Activated CD4-positive, alpha-beta T cell treated with anti-CD3 and anti-CD28 coated beads for 36 hours (primary cell): ENCODE measurements at regions of chr17 and their contacts with region 1.

Region 1: GRCh38 chr17:27544350-27545131 is 86.4 kb upstream of the LGALS9 start:
- DNase-seq: peak; percentile 89
- ATAC-seq: peak; percentile 83
- H3K4me3 Mint-ChIP-seq: peak overlapping the region; percentile 62
- H3K27ac Mint-ChIP-seq: peak overlapping the region; percentile 93
- H3K4me1 Mint-ChIP-seq: peaks cover 80% of the 10 kb centered on the region
- H3K27me3 Mint-ChIP-seq: no peaks in the 10 kb centered on the region

Region 2: GRCh38 chr17:27293898-27294688 is 250.4 kb before region 1 on chr17 and contains the start of gene WSB1:
- CTCF ChIA-PET with region 1: no interaction called
- POLR2A ChIA-PET with region 1: interaction called, 5 read pairs
- intact Hi-C with region 1: loop called in 1 of 2 experiments (anchors 10 kb)
- DNase-seq: peak; percentile 96
- ATAC-seq: peak; percentile 86
- H3K4me3 Mint-ChIP-seq: peak within 1 kb of the TSS; percentile 89
- H3K27ac Mint-ChIP-seq: peak within 1 kb of the TSS; percentile 99
- H3K4me1 Mint-ChIP-seq: peaks cover 32% of the 10 kb centered on the region
- H3K27me3 Mint-ChIP-seq: no peaks in the 10 kb centered on the region
- total RNA-seq, gene WSB1: 145 to 190 TPM

Region 3: DNA sequence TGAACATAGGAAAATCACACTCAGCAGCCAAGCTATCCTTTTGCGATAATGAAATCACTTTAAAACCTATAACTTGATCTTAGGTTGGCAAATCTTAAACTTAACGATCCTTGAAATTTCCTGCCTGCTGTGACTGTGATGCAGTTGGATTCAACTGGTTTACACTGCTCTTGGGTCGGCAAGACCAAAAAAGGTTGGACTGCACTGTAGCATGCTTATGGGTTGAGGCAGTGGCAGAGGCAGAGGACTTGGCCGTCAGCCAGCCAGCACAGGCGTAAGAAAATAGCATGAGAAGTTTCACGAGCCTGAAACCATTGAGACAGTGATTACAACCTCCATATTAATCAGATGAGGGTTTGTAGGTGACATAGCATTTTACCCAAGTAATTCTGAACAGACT is 229.2 kb before region 1 on chr17:
- CTCF ChIA-PET with region 1: no interaction called
- POLR2A ChIA-PET with region 1: no interaction called
- intact Hi-C with region 1: no loop called
- DNase-seq: no peak
- ATAC-seq: no peak
- H3K4me3 Mint-ChIP-seq: no peak overlapping the region
- H3K27ac Mint-ChIP-seq: no peak overlapping the region
- H3K4me1 Mint-ChIP-seq: no peaks in the 10 kb centered on the region
- H3K27me3 Mint-ChIP-seq: no peaks in the 10 kb centered on the region

Region 4: GRCh38 chr17:27353461-27354050 is 191.0 kb before region 1 on chr17:
- CTCF ChIA-PET with region 1: no interaction called
- POLR2A ChIA-PET with region 1: no interaction called
- intact Hi-C with region 1: loop called (anchors 1 to 10 kb)
- DNase-seq: peak; percentile 94
- ATAC-seq: peak; percentile 90
- H3K4me3 Mint-ChIP-seq: peak overlapping the region; percentile 85
- H3K27ac Mint-ChIP-seq: peak overlapping the region; percentile 95
- H3K4me1 Mint-ChIP-seq: peaks cover 25% of the 10 kb centered on the region
- H3K27me3 Mint-ChIP-seq: no peaks in the 10 kb centered on the region

Region 5: GRCh38 chr17:27466743-27467375 is 77.7 kb before region 1 on chr17:
- CTCF ChIA-PET with region 1: interaction called, 10 read pairs
- POLR2A ChIA-PET with region 1: interaction called, 17 read pairs
- intact Hi-C with region 1: no loop called
- DNase-seq: peak; percentile 91
- ATAC-seq: peak; percentile 84
- H3K4me3 Mint-ChIP-seq: peak overlapping the region; percentile 71
- H3K27ac Mint-ChIP-seq: peak overlapping the region; percentile 96
- H3K4me1 Mint-ChIP-seq: peaks cover 93% of the 10 kb centered on the region
- H3K27me3 Mint-ChIP-seq: no peaks in the 10 kb centered on the region

Region 6: DNA sequence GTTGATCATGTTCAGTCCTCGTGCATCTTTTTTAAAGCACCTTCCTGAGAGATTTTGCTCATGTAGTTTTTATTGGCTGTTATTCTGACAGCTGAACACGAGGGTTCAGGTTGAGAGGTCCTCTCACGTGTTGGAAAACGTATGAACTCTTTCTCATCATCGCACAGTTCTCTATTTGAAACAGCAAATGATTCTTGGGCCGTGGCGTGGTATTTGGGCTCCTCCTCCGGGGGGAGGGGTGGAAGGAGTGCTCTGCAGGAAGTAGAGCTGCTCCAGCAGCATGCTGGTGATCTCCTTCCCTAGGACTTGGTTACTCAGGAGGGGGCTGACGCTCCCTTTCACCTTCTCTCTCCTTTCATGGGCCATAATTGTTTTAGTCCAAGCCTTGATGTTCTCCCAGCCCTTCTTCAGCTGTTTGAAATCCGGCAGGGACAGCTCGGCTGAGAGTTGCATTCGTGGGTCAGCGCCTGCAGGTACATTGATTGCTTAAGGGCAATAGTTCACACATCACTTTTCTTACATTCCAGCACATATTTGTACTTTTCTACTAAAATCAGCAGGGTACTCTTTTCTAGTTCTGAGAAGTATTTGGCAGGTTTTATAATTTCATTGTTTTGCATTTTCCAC is 17.8 kb before region 1 on chr17:
- CTCF ChIA-PET with region 1: interaction called, 3 read pairs
- POLR2A ChIA-PET with region 1: interaction called, 3 read pairs
- intact Hi-C with region 1: loop called (anchors 1 kb)
- DNase-seq: peak; percentile 80
- ATAC-seq: peak; percentile 93
- H3K4me3 Mint-ChIP-seq: no peak overlapping the region
- H3K27ac Mint-ChIP-seq: peak overlapping the region; percentile 48
- H3K4me1 Mint-ChIP-seq: peaks cover 74% of the 10 kb centered on the region
- H3K27me3 Mint-ChIP-seq: no peaks in the 10 kb centered on the region

Region 7: GRCh38 chr17:27569257-27569722 is 24.7 kb after region 1 on chr17:
- CTCF ChIA-PET with region 1: interaction called, 16 read pairs
- POLR2A ChIA-PET with region 1: interaction called, 7 read pairs
- intact Hi-C with region 1: loop called in 1 of 2 experiments (anchors 2 kb)
- DNase-seq: peak; percentile 83
- ATAC-seq: peak; percentile 70
- H3K4me3 Mint-ChIP-seq: no peak overlapping the region
- H3K27ac Mint-ChIP-seq: peak overlapping the region; percentile 68
- H3K4me1 Mint-ChIP-seq: peaks cover 75% of the 10 kb centered on the region
- H3K27me3 Mint-ChIP-seq: no peaks in the 10 kb centered on the region

Region 8: DNA sequence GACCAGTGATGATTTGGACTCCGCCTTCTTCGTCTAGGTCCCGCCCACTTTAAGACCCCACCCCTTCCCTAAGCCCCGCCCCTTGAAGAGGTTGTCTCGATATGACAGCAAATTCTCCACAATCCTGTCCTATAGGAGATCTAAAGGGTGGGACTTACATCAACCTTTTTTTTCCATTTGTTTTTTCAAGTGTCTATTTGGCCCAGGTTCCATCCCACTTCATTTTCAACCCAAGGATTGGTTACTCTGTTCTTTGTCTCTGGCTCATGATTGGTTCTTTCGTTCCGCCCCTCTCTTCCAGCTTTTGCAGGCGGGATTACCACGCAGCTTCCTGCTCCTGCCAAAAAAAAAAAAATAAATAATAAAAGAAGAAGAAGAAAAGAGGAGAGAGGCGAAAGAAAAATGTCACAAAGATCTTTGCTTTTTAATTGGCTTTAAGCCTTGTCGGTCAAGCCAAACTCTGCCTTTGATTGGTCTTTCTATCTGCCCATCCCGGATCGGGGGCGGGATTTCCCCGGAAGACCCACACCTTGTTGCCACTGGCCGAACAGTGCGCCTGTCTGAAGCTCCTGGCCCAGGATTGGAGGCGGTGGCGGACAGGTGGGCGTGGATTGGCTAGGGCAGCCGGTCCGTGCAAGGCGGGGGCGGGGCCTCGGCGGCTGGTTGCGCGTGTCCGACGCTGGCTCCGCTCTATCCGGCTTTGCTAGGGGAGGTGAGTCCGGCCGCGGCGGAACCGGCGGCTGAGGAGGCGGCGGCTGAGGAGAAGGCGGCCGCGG is 496.7 kb after region 1 on chr17:
- CTCF ChIA-PET with region 1: no interaction called
- POLR2A ChIA-PET with region 1: no interaction called
- intact Hi-C with region 1: loop called in 1 of 2 experiments (anchors 5 kb)
- DNase-seq: peak; percentile 100
- ATAC-seq: peak; percentile 96
- H3K4me3 Mint-ChIP-seq: peak overlapping the region; percentile 79
- H3K27ac Mint-ChIP-seq: peak overlapping the region; percentile 74
- H3K4me1 Mint-ChIP-seq: peaks cover 52% of the 10 kb centered on the region
- H3K27me3 Mint-ChIP-seq: no peaks in the 10 kb centered on the region